AG04450 (cell line): ENCODE measurements at regions of chr4 and their contacts with region 1.

Region 1: DNA sequence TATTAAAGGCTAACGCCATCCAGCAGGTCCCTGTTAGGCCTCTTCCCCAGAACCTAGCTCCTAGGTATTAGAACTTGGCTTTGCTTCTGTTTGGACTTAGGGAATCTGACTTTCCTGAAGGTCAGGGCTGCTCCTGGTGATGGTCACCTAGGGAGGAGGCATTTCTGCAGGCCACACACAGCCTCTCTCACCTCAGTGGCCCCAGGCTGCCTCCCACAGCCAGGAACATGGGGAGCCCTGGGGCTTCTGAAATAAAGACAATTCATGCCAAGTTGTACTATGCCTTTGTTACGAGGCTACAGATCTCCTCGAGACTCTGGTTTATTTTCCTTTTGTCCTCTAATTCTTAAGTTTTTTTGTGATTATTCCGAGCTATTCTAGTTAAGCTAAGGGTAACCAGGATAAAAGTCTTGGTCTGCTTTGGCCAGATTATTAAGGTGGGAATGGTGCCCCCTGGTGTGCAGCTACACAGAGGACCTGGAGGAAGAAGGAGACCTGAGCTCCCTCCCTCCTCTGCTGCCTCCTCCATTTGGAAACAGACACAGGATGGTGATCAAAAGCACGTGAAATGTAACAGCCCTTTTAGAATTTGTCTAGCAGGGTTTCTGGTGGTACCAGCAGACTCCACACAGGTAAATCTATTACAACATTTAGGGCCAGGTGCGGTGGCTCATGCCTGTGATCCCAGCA is 131.0 kb downstream of the DCLK2 start:
- DNase-seq: peak; percentile 44
- H3K4me3 ChIP-seq: no peak overlapping the region
- H3K27ac ChIP-seq: no peak overlapping the region
- H3K27me3 ChIP-seq: no peaks in the 10 kb centered on the region
- CTCF ChIP-seq: peak; percentile 71

Region 2: GRCh38 chr4:149980941-149981340 is 228.3 kb before region 1 on chr4:
- CTCF ChIA-PET with region 1: interaction called, 13 read pairs
- POLR2A ChIA-PET with region 1: no interaction called
- DNase-seq: no peak
- H3K4me3 ChIP-seq: no peak overlapping the region
- H3K27ac ChIP-seq: no peak overlapping the region
- H3K27me3 ChIP-seq: no peaks in the 10 kb centered on the region
- CTCF ChIP-seq: peak; percentile 87

Region 3: DNA sequence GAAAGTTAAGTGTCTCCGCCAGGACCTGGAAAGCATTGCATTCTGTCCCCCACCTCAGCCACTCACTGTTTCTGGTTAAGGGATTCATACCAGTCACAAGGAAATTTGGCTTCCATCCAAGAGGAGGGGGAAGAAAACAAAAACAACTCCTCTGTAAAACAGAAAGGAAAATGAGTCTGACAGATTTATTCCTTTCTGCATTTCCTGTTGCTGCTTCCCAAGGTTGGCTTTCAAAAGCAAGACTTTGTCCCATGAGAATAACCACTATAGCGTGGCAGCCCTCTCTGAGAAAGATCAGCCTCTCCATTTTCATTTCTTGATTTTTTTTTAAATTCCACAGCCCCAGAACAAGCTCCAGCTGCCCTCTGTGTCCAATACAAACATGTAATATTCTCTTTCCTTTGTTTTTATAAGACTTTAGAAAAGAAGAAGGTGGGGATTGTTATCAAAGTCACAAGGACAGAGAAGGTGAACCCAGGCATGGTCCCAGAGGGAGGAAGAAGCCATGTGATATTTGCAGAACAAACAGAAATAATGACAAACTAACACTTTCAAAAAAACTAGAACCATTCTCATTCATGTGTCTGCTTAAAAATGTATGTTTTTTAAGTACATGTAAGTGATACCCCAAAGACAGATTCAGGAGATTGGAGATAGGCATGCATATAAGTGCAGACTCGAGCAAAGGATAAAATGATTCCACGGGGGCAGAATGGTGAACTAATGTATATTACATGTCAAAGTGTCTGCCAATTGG is 221.8 kb before region 1 on chr4:
- CTCF ChIA-PET with region 1: interaction called, 13 read pairs
- POLR2A ChIA-PET with region 1: no interaction called
- DNase-seq: no peak
- H3K4me3 ChIP-seq: no peak overlapping the region
- H3K27ac ChIP-seq: no peak overlapping the region
- H3K27me3 ChIP-seq: no peaks in the 10 kb centered on the region
- CTCF ChIP-seq: no peak

Region 4: GRCh38 chr4:149999485-150000074 is 209.7 kb before region 1 on chr4:
- CTCF ChIA-PET with region 1: interaction called, 108 read pairs
- POLR2A ChIA-PET with region 1: no interaction called
- DNase-seq: peak; percentile 61
- H3K4me3 ChIP-seq: no peak overlapping the region
- H3K27ac ChIP-seq: no peak overlapping the region
- H3K27me3 ChIP-seq: no peaks in the 10 kb centered on the region
- CTCF ChIP-seq: peak; percentile 87

Region 5: DNA sequence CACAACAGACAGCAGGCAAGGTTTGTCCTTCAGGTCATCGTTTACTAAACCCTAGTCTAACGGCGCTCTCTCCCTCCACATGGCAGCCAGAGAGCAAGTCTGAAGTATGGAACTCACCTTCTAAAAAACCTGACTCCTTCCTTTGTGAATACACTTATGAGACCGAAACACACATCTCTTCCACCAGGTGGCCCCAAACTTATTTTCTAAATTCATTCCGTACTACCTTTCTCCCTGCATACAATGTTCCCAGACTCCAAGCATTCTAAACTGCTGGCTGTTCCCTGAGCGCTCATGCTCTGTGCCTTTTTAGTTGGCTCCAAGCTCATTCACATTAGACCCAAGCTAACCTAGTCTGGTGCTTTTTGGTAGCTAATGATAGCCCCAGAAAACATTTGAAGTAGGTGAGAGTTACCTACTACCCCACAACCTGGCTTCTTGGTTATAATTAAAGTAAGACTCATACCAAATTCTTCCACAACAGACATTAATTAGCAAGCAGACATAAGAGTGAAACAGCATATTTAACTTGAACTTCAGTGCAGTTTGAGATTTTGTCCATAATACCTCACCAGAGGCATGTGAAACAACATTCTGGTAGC is 198.7 kb before region 1 on chr4:
- CTCF ChIA-PET with region 1: interaction called, 108 read pairs
- POLR2A ChIA-PET with region 1: no interaction called
- DNase-seq: peak; percentile 36
- H3K4me3 ChIP-seq: no peak overlapping the region
- H3K27ac ChIP-seq: no peak overlapping the region
- H3K27me3 ChIP-seq: no peaks in the 10 kb centered on the region
- CTCF ChIP-seq: peak; percentile 66

Region 6: DNA sequence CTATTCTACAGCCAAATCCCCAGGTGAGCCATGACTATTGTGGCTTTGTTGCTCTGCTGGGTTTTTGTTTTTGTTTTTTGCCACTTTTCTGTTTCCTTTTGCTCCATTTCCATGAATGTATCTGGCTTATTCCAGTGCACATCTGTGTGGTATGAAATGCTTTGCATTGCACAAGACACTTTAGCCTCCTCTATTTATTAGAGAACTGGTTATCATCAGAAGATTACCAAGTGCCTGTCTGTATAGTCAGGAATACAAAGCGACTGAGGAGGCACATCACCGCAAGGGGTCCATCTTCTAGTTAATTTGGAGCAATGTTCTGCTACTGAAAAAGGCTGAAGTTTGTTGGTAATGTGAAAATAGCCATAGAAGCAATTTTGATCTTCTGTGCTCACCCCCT is 10.2 kb before region 1 on chr4:
- CTCF ChIA-PET with region 1: interaction called, 14 read pairs
- POLR2A ChIA-PET with region 1: no interaction called
- DNase-seq: no peak
- H3K4me3 ChIP-seq: no peak overlapping the region
- H3K27ac ChIP-seq: no peak overlapping the region
- H3K27me3 ChIP-seq: no peaks in the 10 kb centered on the region
- CTCF ChIP-seq: no peak

Region 7: GRCh38 chr4:150439451-150439933 is 230.2 kb after region 1 on chr4:
- CTCF ChIA-PET with region 1: no interaction called
- POLR2A ChIA-PET with region 1: no interaction called
- DNase-seq: no peak
- H3K4me3 ChIP-seq: no peak overlapping the region
- H3K27ac ChIP-seq: no peak overlapping the region
- H3K27me3 ChIP-seq: no peaks in the 10 kb centered on the region
- CTCF ChIP-seq: no peak

Region 8: DNA sequence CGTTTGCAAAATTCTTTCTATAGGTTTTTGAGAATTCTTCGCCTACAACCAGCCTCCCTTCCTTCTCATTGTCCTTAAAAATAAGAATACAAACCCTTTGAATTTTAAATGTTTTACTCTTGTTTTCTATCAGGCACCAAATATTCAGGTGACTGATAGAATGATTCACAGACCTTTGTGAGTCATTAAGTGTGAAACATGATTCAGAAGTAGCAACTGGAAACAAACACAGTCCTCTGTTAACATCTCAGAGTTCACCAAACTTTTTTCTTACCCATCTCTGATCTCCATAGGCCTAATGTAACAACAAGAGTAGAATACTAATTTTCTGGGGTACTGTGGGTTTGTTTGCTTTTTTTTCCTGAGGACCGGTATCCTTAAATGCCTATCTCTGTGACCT is 309.3 kb after region 1 on chr4:
- CTCF ChIA-PET with region 1: no interaction called
- POLR2A ChIA-PET with region 1: no interaction called
- DNase-seq: no peak
- H3K4me3 ChIP-seq: no peak overlapping the region
- H3K27ac ChIP-seq: no peak overlapping the region
- H3K27me3 ChIP-seq: no peaks in the 10 kb centered on the region
- CTCF ChIP-seq: no peak